PC-3 (cell line): ENCODE measurements at regions of chr9 and their contacts with region 1.

Region 1: GRCh38 chr9:105694190-105694847 is at the start of gene TMEM38B:
- DNase-seq: peak; percentile 80
- ATAC-seq: peak; percentile 85
- H3K4me3 ChIP-seq: peak within 1 kb of the TSS; percentile 98
- H3K27ac ChIP-seq: no peak within 1 kb of the TSS
- H3K4me1 ChIP-seq: peaks cover 7% of the 10 kb centered on the region; the same call in 1 of the 2 replicates
- H3K27me3 ChIP-seq: no peaks in the 10 kb centered on the region
- CTCF ChIP-seq: no peak
- total RNA-seq, gene TMEM38B: 13.3 and 16.0 TPM in 2 replicates

Region 2: DNA sequence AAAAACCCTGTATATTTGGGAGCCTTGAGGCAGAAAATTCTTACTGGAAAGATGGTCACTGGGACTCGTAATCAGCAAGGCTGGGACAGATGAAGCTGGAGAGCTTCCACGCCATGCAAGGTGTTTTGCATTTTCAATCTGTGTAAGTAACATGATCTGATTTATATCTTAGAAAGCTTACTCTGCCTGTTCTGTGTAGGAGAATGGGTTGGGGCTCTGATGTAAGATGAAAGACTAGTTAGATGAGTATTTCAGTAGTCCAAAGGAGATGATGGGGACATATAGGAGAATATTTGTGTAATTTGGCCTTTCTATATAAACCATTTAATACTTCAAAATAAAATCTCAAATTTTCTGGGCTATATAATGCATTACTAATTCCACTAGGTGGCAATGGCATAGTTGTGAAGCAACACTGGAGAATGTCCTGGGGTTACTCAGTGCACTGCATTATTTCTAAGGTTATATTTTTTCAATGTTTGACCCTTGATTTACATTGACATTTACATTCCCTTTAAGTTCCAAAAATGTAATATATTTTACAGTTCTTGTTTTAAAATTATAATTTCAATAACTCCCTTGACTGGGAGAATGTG is 268.4 kb before region 1 on chr9:
- CTCF ChIA-PET with region 1: no interaction called
- POLR2A ChIA-PET with region 1: no interaction called
- intact Hi-C with region 1: loop called (anchors 2 kb)
- DNase-seq: peak; percentile 50
- ATAC-seq: peak; percentile 71
- H3K4me3 ChIP-seq: no peak overlapping the region
- H3K27ac ChIP-seq: no peak overlapping the region
- H3K4me1 ChIP-seq: no peaks in the 10 kb centered on the region
- H3K27me3 ChIP-seq: no peaks in the 10 kb centered on the region
- CTCF ChIP-seq: peak; percentile 63

Region 3: GRCh38 chr9:105608721-105609598 is 85.4 kb before region 1 on chr9:
- CTCF ChIA-PET with region 1: no interaction called
- POLR2A ChIA-PET with region 1: no interaction called
- intact Hi-C with region 1: loop called (anchors 2 kb)
- DNase-seq: peak; percentile 55
- ATAC-seq: peak; percentile 38; the same call in 1 of the 2 replicates
- H3K4me3 ChIP-seq: no peak overlapping the region
- H3K27ac ChIP-seq: no peak overlapping the region
- H3K4me1 ChIP-seq: no peaks in the 10 kb centered on the region
- H3K27me3 ChIP-seq: no peaks in the 10 kb centered on the region
- CTCF ChIP-seq: peak; percentile 63

Region 4: DNA sequence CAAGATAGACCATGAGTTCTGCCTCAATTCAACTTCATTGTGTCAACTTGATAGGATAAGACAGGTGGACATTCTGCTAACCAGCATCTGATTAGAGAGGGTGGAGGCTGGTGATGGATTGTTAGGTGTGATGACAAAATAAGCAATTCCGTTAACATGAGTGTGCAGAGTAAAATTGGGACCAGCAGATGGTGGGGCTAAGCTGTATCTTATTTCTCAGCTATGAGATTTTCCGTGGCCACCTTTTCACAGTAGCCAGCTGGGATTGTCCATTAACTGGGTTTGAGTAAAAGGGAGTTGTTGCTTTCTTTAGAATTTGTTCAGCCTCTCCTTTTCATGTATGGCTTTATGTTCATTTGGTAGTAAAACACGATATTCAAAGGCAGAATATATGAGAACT is 60.9 kb before region 1 on chr9:
- CTCF ChIA-PET with region 1: interaction called, 3 read pairs
- POLR2A ChIA-PET with region 1: no interaction called
- intact Hi-C with region 1: loop called (anchors 2 kb)
- DNase-seq: no peak
- ATAC-seq: no peak
- H3K4me3 ChIP-seq: no peak overlapping the region
- H3K27ac ChIP-seq: no peak overlapping the region
- H3K4me1 ChIP-seq: no peaks in the 10 kb centered on the region
- H3K27me3 ChIP-seq: no peaks in the 10 kb centered on the region
- CTCF ChIP-seq: no peak

Region 5: GRCh38 chr9:105656131-105656921 is 38.0 kb before region 1 on chr9:
- CTCF ChIA-PET with region 1: no interaction called
- POLR2A ChIA-PET with region 1: no interaction called
- intact Hi-C with region 1: no loop called
- DNase-seq: no peak
- ATAC-seq: peak; percentile 78
- H3K4me3 ChIP-seq: peak overlapping the region; percentile 67
- H3K27ac ChIP-seq: no peak overlapping the region
- H3K4me1 ChIP-seq: no peaks in the 10 kb centered on the region
- H3K27me3 ChIP-seq: no peaks in the 10 kb centered on the region
- CTCF ChIP-seq: peak; percentile 41

Region 6: DNA sequence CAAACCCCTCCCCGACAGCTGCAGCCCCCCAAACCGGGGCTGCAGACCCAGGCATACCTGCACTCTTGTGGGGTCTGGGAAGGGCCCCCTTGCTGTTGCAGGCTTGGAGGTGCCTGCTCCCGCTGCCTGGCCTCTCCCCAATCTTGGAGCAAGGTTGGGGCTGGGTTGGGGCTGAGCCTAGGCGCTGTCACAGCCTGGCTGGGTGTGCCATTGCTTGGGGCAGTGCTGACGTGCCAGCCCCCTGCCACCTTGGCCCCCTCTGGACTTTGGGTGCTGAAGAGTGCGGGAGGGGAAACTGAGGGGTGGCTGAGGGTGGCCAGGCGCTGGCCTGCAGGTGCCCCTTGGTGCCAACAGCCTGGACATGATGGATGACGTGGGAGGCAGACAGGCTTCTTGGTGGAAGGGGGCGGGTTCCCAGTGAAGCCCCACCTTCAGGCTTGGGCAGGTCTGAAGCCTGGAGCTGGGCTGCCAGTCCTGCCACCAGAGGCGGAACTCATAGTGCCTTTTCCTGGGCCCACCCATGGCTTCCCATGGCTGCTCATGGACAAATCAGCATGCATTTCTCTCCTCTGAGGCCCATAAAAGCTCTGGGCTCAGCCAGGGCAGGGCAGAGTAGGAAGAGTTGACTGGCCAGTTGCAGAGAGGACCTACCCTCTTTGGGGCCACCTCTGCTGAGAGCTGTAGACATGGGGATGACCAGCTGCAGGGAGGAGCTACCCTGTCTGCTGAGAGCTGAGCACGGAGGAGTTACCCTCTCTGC is 19.1 kb after region 1 on chr9:
- CTCF ChIA-PET with region 1: no interaction called
- POLR2A ChIA-PET with region 1: no interaction called
- intact Hi-C with region 1: loop called (anchors 1 kb)
- DNase-seq: no peak
- ATAC-seq: no peak
- H3K4me3 ChIP-seq: no peak overlapping the region
- H3K27ac ChIP-seq: no peak overlapping the region
- H3K4me1 ChIP-seq: no peaks in the 10 kb centered on the region
- H3K27me3 ChIP-seq: no peaks in the 10 kb centered on the region
- CTCF ChIP-seq: no peak